Cardiac septum (tissue), 1 donor: ENCODE measurements at regions of chr17 and their contacts with region 1.

Region 1: DNA sequence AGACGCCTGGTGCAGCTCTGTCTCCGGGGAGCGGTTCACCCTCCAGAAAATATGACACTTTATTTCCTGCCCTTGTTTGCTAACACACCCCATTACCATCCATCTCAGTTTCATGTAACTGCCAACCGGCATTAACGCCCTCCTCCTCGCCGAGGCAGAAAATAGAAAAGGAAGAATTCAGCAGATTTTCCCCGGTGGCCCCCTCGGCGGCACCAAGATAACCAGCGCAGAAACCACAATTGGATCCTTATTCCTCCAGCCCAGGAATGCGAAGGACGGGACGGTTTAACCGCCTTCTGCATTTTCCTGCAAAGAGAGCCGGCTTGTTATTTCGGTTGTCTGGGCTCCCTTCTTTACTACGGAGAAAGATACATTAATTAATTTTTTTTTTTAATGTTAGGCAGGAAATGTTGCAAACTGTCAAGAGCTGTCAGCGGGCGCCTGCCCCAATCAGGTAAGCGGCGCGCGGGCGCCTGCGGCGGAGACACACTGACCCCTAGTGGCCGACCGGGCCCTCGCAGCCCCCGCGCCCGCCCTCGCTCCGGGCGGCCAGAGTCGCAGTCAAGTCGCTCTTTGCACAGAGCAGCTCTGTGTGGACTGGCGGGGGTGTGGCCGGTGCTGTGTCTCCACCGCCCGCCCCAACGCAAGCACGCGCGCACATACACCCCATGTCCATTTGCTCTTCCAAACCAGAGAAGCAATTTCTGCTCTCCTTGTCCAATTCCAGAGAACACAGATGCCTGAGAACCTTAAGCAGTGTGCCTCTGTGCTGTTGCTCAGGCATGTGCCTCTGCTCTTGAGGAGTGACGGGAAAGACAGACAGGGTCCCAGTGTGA is 53.6 kb downstream of the C17orf67 start:
- DNase-seq: peak; percentile 93

Region 2: DNA sequence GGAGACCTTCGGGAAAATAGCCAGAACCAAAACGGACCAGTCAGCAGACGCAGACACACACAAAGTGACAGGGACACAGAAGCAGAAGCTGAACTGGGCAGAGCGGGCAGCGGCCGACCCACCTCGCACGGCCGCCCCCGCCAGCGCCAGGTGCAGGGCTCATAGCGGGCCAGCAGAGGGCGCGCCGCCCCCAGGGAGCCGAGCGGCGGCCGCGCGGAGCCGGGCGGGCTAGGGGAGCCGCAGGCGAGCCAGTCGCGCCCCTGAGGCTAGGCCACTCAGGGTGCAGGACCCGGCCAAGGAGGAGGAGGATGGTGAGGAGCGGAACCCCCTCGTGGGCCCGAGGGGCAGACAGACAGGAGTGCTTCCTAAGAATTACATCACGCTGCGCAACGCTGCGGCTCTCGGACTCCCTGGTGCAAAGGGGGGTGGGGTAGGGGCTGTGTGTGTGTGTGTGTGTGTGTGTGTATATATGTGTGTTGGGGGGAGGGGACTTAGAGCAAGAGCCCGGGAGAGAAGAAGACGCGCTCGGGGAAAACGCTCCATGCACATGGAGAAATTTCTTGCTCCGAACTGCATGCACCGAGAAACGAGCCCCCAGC is 187.5 kb before region 1 on chr17:
- intact Hi-C with region 1: loop called (anchors 2 kb)
- DNase-seq: no peak

Region 3: DNA sequence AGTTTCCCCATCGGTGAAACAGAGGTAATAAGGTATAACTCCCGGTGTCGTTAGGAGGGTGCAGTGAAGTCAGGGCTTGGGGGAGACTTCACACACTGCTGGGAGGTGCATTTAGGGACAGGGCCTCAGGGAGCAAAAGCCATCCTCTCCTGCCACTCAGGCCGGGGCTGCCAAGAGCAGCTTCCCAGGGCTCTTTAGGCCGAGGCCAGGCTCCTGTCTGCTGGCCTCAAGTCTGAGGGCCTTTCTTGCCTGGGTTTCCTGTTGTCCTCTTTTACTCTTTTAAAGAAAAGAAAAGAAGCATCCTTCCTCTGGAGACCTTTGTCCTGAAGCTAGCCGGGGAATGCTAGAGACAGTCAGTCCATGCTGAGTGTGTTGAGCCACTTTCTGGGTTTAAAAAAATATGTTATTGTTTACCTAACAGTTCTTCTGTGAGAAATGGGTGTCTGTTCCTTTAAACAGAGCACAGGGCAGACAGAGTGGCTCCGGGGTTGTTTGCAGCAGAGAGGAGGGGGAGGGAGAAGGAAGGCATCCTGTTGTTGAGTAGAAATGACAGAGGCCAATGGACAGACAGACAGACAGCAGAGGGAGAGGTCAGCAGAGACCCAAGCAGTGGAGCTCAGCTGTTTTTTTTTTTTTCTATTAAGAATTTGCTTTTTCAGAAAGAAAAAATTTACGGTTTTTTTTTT is 25.4 kb before region 1 on chr17:
- intact Hi-C with region 1: no loop called
- DNase-seq: no peak

Region 4: GRCh38 chr17:56798908-56799307 is 18.8 kb after region 1 on chr17:
- intact Hi-C with region 1: no loop called
- DNase-seq: no peak

Region 5: DNA sequence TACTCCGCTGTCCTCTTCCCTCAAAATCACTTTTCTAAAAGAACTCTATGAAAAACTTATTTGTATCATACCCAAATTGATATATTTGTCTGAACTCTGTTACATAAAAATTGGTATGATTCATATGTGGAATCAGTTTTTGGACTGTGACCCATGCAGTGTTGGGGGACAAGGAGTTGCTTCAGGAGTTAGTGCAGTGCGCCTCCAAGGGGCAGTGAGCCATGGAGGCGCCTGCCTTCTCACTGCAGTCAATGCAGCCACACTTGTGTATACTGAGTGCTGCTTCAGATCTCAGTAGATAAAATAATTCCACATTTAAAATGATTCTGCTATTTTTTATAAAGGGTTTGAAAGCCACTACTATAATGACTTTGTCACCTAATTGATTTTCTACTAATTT is 86.4 kb after region 1 on chr17:
- intact Hi-C with region 1: no loop called
- DNase-seq: no peak